ENCODE measurements at regions of chr12 and their contacts with region 1.

Region 1: GRCh38 chr12:18153826-18154225 is 63.8 kb upstream of the RERGL start:
- DNase-seq: no peak
- H3K4me3 ChIP-seq: no peak overlapping the region
- CTCF ChIP-seq: no peak

Region 2: GRCh38 chr12:18165422-18165871 is 11.6 kb after region 1 on chr12:
- CTCF ChIA-PET with region 1: interaction called, 18 read pairs
- POLR2A ChIA-PET with region 1: no interaction called
- DNase-seq: no peak
- H3K4me3 ChIP-seq: peak overlapping the region; percentile 21; the same call in 1 of the 2 replicates
- CTCF ChIP-seq: no peak

Region 3: GRCh38 chr12:19482551-19483109 is 1328.8 kb after region 1 on chr12:
- CTCF ChIA-PET with region 1: no interaction called
- POLR2A ChIA-PET with region 1: no interaction called
- DNase-seq: no peak
- H3K4me3 ChIP-seq: no peak overlapping the region
- CTCF ChIP-seq: no peak

Measured in AG04449 (cell line).